Activated CD4-positive, alpha-beta T cell treated with anti-CD3 and anti-CD28 coated beads for 36 hours (primary cell): ENCODE measurements at regions of chr6 and their contacts with region 1.

Region 1: GRCh38 chr6:13487122-13488014 is at the start of gene GFOD1:
- DNase-seq: peak; percentile 87
- ATAC-seq: peak; percentile 83
- H3K4me3 Mint-ChIP-seq: peak within 1 kb of the TSS; percentile 83
- H3K27ac Mint-ChIP-seq: peak within 1 kb of the TSS; percentile 74
- H3K4me1 Mint-ChIP-seq: peaks cover 36% of the 10 kb centered on the region
- H3K27me3 Mint-ChIP-seq: peaks cover 8% of the 10 kb centered on the region
- total RNA-seq, gene GFOD1: 4.2 to 5.8 TPM

Region 2: DNA sequence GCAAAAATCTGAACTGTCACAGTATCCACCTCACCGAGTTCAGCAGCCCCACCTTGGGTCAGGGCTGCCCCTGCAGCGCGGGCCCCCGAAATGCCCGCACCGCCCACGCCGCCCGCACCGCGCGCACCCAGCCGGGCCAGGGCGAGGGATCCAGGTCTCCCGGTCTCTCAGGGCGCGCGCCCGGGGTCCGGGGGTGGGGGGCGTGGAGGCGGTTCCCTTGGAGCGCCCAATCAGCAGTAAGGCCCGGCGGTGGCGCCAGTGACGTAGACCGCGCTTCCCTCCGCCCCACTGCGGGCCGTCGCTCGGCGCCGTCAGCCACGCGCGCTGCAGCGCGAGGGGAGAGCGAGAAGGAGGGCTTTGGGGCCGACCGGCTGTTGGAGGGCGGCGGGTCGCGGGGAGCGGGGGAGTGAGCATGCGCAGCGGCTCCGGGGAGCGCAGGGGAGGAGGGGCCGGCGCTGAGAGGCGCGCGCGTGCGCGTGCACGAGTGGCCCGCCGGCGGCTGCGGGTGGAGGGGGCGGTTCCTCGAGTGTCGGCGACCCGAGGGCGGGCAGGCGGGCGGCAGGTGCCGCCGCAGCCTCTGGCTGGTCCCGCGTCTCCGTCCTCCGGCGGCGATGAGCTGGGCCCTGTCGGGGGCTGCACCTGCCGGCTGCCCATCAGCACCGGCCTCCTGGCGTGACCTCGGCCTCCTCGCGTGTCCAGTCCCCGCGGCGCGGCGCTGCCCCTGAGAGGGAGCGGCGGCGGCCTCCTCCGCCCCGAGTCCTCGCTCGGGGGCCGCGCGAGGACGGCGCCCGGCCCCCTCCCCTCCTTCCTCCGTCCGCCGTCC is 1949.9 kb before region 1 on chr6 and contains the start of gene TMEM170B:
- CTCF ChIA-PET with region 1: no interaction called
- POLR2A ChIA-PET with region 1: no interaction called
- intact Hi-C with region 1: loop called in 1 of 2 experiments (anchors 2 kb)
- DNase-seq: peak; percentile 95
- ATAC-seq: peak; percentile 96
- H3K4me3 Mint-ChIP-seq: peak within 1 kb of the TSS; percentile 76
- H3K27ac Mint-ChIP-seq: no peak within 1 kb of the TSS
- H3K4me1 Mint-ChIP-seq: peaks cover 5% of the 10 kb centered on the region
- H3K27me3 Mint-ChIP-seq: peaks cover 8% of the 10 kb centered on the region
- total RNA-seq, gene TMEM170B: 0.98 to 1.3 TPM

Region 3: DNA sequence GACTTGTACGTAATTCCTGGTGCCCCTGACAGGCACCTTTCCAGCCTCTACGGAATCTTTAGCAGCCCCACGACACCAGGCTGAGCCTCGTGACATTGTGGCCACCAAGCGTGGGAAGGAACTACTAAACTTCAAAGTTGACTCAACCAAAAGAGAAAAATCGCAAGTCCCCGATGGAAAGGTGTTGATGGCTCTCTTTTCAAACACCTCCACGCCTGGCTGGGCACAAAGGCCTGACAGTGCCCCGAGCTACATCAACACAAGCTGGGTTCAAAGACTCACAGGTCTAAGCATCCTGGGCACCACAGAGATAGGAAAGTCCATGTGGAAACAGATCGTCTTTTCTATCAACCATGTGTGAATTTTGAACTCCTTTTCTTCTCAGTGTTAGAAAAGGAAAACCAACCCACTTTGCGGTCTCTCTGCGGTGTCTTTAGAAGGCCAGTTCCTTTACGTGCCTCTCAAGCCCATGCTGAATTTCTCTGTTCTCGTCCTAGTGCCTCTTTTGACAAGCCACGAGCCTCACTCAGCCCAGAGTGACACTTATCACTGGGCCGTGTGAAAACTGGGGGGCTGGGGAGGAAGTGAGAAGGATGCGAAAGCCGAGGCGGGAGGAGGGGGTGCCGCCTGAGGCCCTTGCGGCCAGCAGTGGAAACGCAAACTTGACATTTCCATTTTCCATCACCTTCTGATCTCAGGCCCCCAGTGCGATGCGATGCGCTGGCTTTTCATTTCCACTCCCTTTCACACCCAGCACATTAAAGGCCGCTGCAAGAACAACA is 59.4 kb before region 1 on chr6:
- CTCF ChIA-PET with region 1: no interaction called
- POLR2A ChIA-PET with region 1: interaction called, 3 read pairs
- intact Hi-C with region 1: loop called (anchors 1 to 2 kb)
- DNase-seq: peak; percentile 90
- ATAC-seq: peak; percentile 68
- H3K4me3 Mint-ChIP-seq: peak overlapping the region; percentile 58
- H3K27ac Mint-ChIP-seq: peak overlapping the region; percentile 95
- H3K4me1 Mint-ChIP-seq: peaks cover 76% of the 10 kb centered on the region
- H3K27me3 Mint-ChIP-seq: no peaks in the 10 kb centered on the region

Region 4: GRCh38 chr6:13466304-13467215 is 20.8 kb before region 1 on chr6:
- CTCF ChIA-PET with region 1: interaction called, 3 read pairs
- POLR2A ChIA-PET with region 1: no interaction called
- intact Hi-C with region 1: loop called in 1 of 2 experiments (anchors 2 kb)
- DNase-seq: peak; percentile 78
- ATAC-seq: peak; percentile 91
- H3K4me3 Mint-ChIP-seq: peak overlapping the region; percentile 44
- H3K27ac Mint-ChIP-seq: peak overlapping the region; percentile 87
- H3K4me1 Mint-ChIP-seq: peaks cover 71% of the 10 kb centered on the region
- H3K27me3 Mint-ChIP-seq: no peaks in the 10 kb centered on the region

Region 5: DNA sequence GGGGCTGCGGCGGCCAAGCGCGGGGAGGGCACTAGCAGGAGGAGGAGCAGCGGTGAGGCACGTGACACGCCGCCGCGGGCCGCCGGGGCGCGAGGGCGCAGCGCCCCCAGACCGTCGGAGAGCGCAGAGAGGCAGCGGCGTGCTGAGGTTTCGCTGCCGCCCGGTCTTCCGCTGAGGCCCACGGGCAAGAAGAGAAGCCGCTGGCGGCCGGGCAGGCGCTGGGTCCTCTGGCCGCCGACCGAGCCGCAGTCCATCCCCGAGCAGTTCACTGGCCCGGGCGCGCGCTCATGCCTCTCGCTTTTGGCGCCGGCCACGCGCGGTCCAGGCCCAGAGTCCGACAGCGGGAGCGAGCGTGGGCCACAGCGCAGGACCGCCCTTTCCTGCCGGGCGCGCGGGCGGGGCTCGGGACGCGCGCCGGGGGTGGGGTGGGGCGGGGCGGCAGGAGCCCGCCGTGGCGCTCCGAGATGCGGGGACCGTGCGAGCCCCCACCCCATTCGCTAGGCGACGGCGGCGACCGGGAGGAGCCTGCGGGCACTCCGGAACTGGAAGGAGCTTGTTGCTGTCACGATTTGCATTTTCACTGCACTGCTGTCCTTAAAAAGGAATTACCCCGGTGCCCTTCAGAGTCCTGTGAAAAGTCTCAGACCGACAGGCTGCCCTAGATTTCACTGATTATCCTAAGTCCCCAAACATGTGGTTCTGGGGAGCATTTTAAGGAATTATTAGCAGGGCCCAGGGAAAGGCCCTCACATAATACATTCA is 327.0 kb after region 1 on chr6 and contains the start of gene MCUR1:
- CTCF ChIA-PET with region 1: no interaction called
- POLR2A ChIA-PET with region 1: no interaction called
- intact Hi-C with region 1: loop called in 1 of 2 experiments (anchors 5 kb)
- DNase-seq: peak; percentile 92
- ATAC-seq: peak; percentile 87
- H3K4me3 Mint-ChIP-seq: peak within 1 kb of the TSS; percentile 85
- H3K27ac Mint-ChIP-seq: peak within 1 kb of the TSS; percentile 87
- H3K4me1 Mint-ChIP-seq: peaks cover 27% of the 10 kb centered on the region
- H3K27me3 Mint-ChIP-seq: no peaks in the 10 kb centered on the region
- total RNA-seq, gene MCUR1: 37.9 to 59.3 TPM